Left cardiac atrium (tissue), 4 donors: ENCODE measurements at regions of chr1 and their contacts with region 1.

Region 1: GRCh38 chr1:184176058-184176457 is 124.5 kb downstream of the TSEN15 start:
- DNase-seq: no peak
- ATAC-seq: no peak

Region 2: GRCh38 chr1:184143449-184143848 is 32.6 kb before region 1 on chr1:
- intact Hi-C with region 1: loop called in 1 of 2 experiments (anchors 1 kb)
- DNase-seq: no peak
- ATAC-seq: peak; percentile 61 to 70

Region 3: GRCh38 chr1:184222652-184223052 is 46.6 kb after region 1 on chr1:
- intact Hi-C with region 1: no loop called
- DNase-seq: peak; percentile 37
- ATAC-seq: peak; percentile 60